Mammary epithelial cell (primary cell): ENCODE measurements at regions of chr2 and their contacts with region 1.

Region 1: GRCh38 chr2:233816771-233817170 is 37.6 kb downstream of the HJURP start:
- DNase-seq: no peak
- H3K4me3 ChIP-seq: no peak overlapping the region
- H3K27ac ChIP-seq: no peak overlapping the region
- H3K4me1 ChIP-seq: no peaks in the 10 kb centered on the region
- H3K27me3 ChIP-seq: no peaks in the 10 kb centered on the region
- CTCF ChIP-seq: no peak

Region 2: GRCh38 chr2:233772583-233772982 is 44.2 kb before region 1 on chr2:
- CTCF ChIA-PET with region 1: interaction called, 11 read pairs
- dilution Hi-C with region 1: no loop called
- in situ Hi-C with region 1: no loop called
- intact Hi-C with region 1: no loop called
- DNase-seq: no peak
- H3K4me3 ChIP-seq: no peak overlapping the region
- H3K27ac ChIP-seq: no peak overlapping the region
- H3K4me1 ChIP-seq: no peaks in the 10 kb centered on the region
- H3K27me3 ChIP-seq: no peaks in the 10 kb centered on the region
- CTCF ChIP-seq: no peak